ENCODE measurements at regions of chr2 and their contacts with region 1.

Region 1: DNA sequence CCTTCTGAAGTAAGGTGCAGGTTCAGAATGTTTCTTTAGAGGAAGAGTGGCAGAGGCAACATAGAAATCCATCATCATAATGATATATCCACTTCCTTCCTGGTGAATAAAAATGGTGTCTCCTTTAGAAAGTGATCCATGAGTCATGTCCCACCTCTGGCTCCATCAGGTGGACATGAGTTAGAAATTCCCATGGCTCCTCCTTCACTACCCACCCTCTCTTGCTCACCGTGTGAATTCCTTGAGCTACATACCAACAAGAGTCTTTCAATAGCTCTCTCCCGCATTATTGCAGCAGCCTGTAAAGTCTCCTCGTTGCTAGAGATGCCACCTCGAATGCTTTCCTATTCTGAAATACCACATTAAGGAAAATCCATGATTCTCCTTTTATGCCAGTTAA is 317.6 kb downstream of the LNPK start:
- DNase-seq: no peak
- H3K4me3 ChIP-seq: no peak overlapping the region
- H3K27ac ChIP-seq: no peak overlapping the region
- H3K4me1 ChIP-seq: no peaks in the 10 kb centered on the region
- H3K27me3 ChIP-seq: no peaks in the 10 kb centered on the region
- CTCF ChIP-seq: no peak
- POLR2A ChIP-seq: no peak

Region 2: GRCh38 chr2:176088048-176088936 is 403.8 kb after region 1 on chr2:
- intact Hi-C with region 1: loop called (anchors 10 kb)
- DNase-seq: peak; percentile 75
- H3K4me3 ChIP-seq: no peak overlapping the region
- H3K27ac ChIP-seq: no peak overlapping the region
- H3K4me1 ChIP-seq: peaks cover 11% of the 10 kb centered on the region
- H3K27me3 ChIP-seq: no peaks in the 10 kb centered on the region
- CTCF ChIP-seq: peak; percentile 24 to 81 (median 61)
- POLR2A ChIP-seq: no peak